ENCODE measurements at regions of chr21 and their contacts with region 1.

Region 1: GRCh38 chr21:26715878-26716506 is 129.2 kb downstream of the ADAMTS1 start:
- DNase-seq: peak; percentile 46
- H3K4me3 Mint-ChIP-seq: no peak overlapping the region
- H3K27ac Mint-ChIP-seq: no peak overlapping the region
- H3K4me1 Mint-ChIP-seq: no peaks in the 10 kb centered on the region
- H3K27me3 Mint-ChIP-seq: no peaks in the 10 kb centered on the region
- CTCF ChIP-seq: peak; percentile 53

Region 2: DNA sequence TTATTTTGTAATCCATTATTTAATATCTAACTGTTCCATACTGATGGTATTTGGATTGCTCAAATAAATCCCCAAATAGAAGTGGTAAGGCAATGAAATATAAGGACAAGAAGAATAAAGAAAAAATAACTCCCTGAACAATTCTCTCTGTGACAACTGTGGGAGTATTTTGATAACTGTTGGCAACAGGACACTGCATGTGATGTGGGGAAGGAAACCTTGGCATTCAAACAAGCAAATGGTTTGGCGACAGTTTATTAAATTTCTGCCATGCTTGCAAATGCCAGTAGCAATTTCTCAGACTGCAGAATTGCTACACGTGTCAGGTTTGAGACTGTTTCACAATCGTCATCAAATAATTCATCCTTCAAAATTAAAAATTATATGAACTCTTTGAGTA is 1100.1 kb before region 1 on chr21:
- CTCF ChIA-PET with region 1: no interaction called
- intact Hi-C with region 1: loop called (anchors 10 kb)
- DNase-seq: no peak
- H3K4me3 Mint-ChIP-seq: no peak overlapping the region
- H3K27ac Mint-ChIP-seq: no peak overlapping the region
- H3K4me1 Mint-ChIP-seq: no peaks in the 10 kb centered on the region
- H3K27me3 Mint-ChIP-seq: peaks cover 26% of the 10 kb centered on the region
- CTCF ChIP-seq: no peak

Region 3: DNA sequence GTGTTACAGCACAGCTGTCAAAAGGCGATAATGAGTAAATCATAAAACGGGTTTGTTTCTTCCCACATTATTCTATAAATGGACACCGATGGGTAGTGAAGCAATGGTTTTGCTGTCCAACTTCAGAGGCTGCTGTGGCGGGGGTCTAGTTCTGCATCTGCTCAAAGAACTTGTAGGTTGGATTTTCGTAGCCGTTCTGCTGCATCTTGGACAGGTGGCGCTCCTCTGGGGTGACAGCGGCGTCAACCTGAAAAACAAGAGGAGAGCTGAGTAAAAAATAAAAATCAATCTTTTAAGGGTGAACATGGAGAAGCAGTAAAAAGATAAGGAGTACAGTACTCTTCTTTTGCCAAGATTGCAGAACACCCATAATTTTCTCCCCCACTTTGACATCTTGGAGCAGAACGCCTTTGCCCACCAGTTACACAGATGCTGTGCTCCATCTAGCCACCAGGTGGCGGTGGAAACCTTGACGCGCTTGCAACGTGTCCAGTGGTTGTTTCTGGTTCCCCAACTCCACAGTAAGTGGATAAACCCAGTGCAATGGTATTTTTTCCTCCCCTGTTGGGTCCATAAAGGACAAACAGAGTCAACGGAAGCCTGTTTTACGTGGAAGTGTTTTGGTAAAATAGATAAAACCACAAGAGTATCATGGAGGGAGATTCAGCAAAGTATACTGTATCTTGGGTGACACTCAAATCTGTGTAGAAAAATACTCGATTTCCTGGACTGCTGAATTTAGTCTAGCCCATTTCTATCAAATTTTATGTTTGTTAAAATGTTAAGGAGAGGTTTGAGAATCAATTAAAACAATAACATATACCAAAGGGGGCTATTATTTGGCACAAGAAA is 834.2 kb before region 1 on chr21:
- CTCF ChIA-PET with region 1: no interaction called
- intact Hi-C with region 1: loop called (anchors 5 kb)
- DNase-seq: peak; percentile 54
- H3K4me3 Mint-ChIP-seq: no peak overlapping the region
- H3K27ac Mint-ChIP-seq: no peak overlapping the region
- H3K4me1 Mint-ChIP-seq: peaks cover 6% of the 10 kb centered on the region
- H3K27me3 Mint-ChIP-seq: no peaks in the 10 kb centered on the region
- CTCF ChIP-seq: peak; percentile 83

Region 4: GRCh38 chr21:26366781-26367180 is 349.2 kb before region 1 on chr21:
- CTCF ChIA-PET with region 1: no interaction called
- intact Hi-C with region 1: no loop called
- DNase-seq: no peak
- H3K4me3 Mint-ChIP-seq: no peak overlapping the region
- H3K27ac Mint-ChIP-seq: no peak overlapping the region
- H3K4me1 Mint-ChIP-seq: peaks cover 5% of the 10 kb centered on the region
- H3K27me3 Mint-ChIP-seq: no peaks in the 10 kb centered on the region
- CTCF ChIP-seq: no peak

Region 5: DNA sequence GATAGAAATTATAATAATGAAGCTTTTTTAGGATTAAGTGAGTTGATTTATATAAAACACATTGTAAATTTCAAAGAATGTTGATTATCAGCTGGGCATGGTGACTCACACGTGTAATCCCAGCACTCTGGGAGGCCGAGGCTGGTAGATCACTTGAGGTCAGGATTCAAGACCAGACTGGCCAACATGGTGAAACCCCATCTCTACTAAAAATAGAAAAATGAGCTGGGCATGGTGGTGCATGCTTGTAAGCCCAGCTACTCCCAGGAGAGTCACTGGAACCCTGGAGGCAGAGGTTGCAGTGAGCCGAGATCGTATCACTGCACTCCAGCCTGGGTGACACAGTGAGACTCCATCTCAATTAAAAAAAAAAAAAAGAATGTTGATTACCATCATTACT is 110.8 kb after region 1 on chr21:
- CTCF ChIA-PET with region 1: no interaction called
- intact Hi-C with region 1: no loop called
- DNase-seq: no peak
- H3K4me3 Mint-ChIP-seq: no peak overlapping the region
- H3K27ac Mint-ChIP-seq: no peak overlapping the region
- H3K4me1 Mint-ChIP-seq: peaks cover 7% of the 10 kb centered on the region
- H3K27me3 Mint-ChIP-seq: peaks cover 6% of the 10 kb centered on the region
- CTCF ChIP-seq: no peak

Region 6: GRCh38 chr21:26967062-26967913 is 251.3 kb after region 1 on chr21 and contains the start of gene ADAMTS5:
- CTCF ChIA-PET with region 1: no interaction called
- intact Hi-C with region 1: no loop called
- DNase-seq: no peak
- H3K4me3 Mint-ChIP-seq: no peak within 1 kb of the TSS
- H3K27ac Mint-ChIP-seq: no peak within 1 kb of the TSS
- H3K4me1 Mint-ChIP-seq: no peaks in the 10 kb centered on the region
- H3K27me3 Mint-ChIP-seq: no peaks in the 10 kb centered on the region
- CTCF ChIP-seq: no peak
- total RNA-seq, gene ADAMTS5: not detected in 2 replicates

Measured in Calu3 (cell line).